Prostate gland (tissue), 2 donors: ENCODE measurements at regions of chr1 and their contacts with region 1.

Region 1: DNA sequence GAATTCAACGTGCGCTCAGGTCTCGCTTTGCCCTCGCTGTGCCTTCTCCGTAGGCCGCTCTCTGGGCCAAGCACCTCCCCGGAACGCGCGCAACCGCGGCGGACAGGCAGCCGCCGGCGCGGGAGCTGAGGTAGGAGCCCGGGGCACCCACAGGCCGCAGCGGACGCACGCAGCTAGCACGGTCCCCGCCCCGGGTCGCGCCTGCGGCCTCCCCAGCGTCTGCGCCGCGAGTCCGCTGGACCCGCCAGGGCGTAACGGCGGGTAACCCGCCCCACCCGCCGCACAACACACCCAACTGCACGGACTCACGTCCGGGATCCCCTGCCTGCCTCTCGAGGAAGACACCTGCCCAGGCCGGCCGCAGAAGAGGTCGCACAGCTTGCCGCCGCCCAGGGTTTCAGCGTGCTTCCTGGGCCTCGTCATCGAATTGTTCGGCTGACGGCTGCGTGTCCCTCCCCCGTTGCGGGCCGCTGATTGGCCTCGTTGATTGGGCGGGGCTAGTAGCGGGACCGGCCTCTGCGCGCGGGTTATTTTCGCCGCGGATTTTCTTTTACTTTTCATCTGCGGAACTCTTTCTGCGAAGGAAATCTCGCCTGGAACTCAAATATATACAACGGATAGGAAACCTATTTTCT is at the start of gene CLCC1:
- DNase-seq: peak; percentile 92
- H3K4me3 ChIP-seq: peak within 1 kb of the TSS; percentile 68 to 73
- H3K27ac ChIP-seq: peak within 1 kb of the TSS; percentile 94 to 95
- H3K4me1 ChIP-seq: no peaks in the 10 kb centered on the region
- H3K27me3 ChIP-seq: no peaks in the 10 kb centered on the region
- CTCF ChIP-seq: peak in 1 of 4 experiments; percentile 4
- POLR2A ChIP-seq: peak; percentile 88
- total RNA-seq, gene CLCC1: 30.5 to 33.3 TPM

Region 2: GRCh38 chr1:108678706-108679105 is 284.5 kb before region 1 on chr1:
- intact Hi-C with region 1: no loop called
- DNase-seq: no peak
- H3K4me3 ChIP-seq: no peak overlapping the region
- H3K27ac ChIP-seq: no peak overlapping the region
- H3K4me1 ChIP-seq: no peaks in the 10 kb centered on the region
- H3K27me3 ChIP-seq: no peaks in the 10 kb centered on the region
- CTCF ChIP-seq: no peak
- POLR2A ChIP-seq: no peak

Region 3: GRCh38 chr1:109041621-109042468 is 78.7 kb after region 1 on chr1 and contains the start of gene WDR47:
- intact Hi-C with region 1: loop called (anchors 10 kb)
- DNase-seq: peak; percentile 94
- H3K4me3 ChIP-seq: peak within 1 kb of the TSS; percentile 83 to 99
- H3K27ac ChIP-seq: peak within 1 kb of the TSS; percentile 73 to 81
- H3K4me1 ChIP-seq: no peaks in the 10 kb centered on the region
- H3K27me3 ChIP-seq: no peaks in the 10 kb centered on the region
- CTCF ChIP-seq: no peak
- POLR2A ChIP-seq: peak; percentile 96
- total RNA-seq, gene WDR47: 6.4 to 25.7 TPM

Region 4: DNA sequence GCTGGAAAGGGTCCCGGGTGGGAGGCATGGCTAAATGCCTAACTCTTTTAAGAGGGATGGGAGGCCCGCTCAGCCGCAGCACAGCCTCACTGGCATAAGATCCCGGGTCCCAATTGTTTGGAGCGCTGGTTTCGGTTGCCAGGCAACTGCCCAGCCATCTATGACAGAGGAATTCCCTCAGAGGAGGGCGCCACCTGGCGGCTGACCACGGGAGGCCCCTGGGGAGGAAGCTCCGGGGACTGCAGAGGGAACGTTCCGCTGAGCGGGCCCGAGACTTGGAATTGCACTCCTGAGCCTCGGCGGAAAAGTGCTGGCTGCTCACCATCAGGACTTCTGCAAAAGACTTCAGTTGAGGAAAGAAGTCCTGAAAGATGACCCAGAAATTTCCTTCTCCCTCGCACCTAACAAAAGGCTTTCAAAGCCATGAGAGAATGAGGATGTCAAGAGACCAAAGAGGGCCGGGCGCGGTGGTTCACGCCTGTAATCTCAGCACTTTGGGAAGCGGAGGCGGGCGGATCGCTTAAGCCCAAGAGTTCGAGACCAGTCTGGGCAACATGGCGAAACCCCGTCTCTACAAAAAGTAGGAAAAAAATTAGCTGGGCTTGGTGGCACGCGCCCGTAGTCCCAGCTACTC is 149.6 kb after region 1 on chr1:
- intact Hi-C with region 1: loop called (anchors 10 kb)
- DNase-seq: peak; percentile 87
- H3K4me3 ChIP-seq: no peak overlapping the region
- H3K27ac ChIP-seq: no peak overlapping the region
- H3K4me1 ChIP-seq: no peaks in the 10 kb centered on the region
- H3K27me3 ChIP-seq: no peaks in the 10 kb centered on the region
- CTCF ChIP-seq: peak; percentile 92 to 94 (median 93)
- POLR2A ChIP-seq: no peak

Region 5: GRCh38 chr1:109213785-109214468 is 250.8 kb after region 1 on chr1 and contains the start of gene SARS1:
- intact Hi-C with region 1: loop called (anchors 5 kb)
- DNase-seq: peak; percentile 83
- H3K4me3 ChIP-seq: peak within 1 kb of the TSS; percentile 65 to 66
- H3K27ac ChIP-seq: peak within 1 kb of the TSS; percentile 87
- H3K4me1 ChIP-seq: no peaks in the 10 kb centered on the region
- H3K27me3 ChIP-seq: no peaks in the 10 kb centered on the region
- CTCF ChIP-seq: peak in 1 of 4 experiments; percentile 17
- POLR2A ChIP-seq: peak; percentile 92
- total RNA-seq, gene SARS1: 123 to 132 TPM